Activated CD4-positive, alpha-beta memory T cell treated with anti-CD3 and anti-CD28 coated beads for 36 hours (primary cell): ENCODE measurements at regions of chr16 and their contacts with region 1.

Region 1: GRCh38 chr16:56964243-56965148 is 2.7 kb downstream of the CETP start:
- DNase-seq: peak; percentile 97
- H3K4me3 Mint-ChIP-seq: no peak overlapping the region
- H3K27ac Mint-ChIP-seq: peak overlapping the region; percentile 11
- H3K4me1 Mint-ChIP-seq: peaks cover 19% of the 10 kb centered on the region
- H3K27me3 Mint-ChIP-seq: no peaks in the 10 kb centered on the region

Region 2: GRCh38 chr16:56715120-56715519 is 249.4 kb before region 1 on chr16:
- CTCF ChIA-PET with region 1: no interaction called
- POLR2A ChIA-PET with region 1: no interaction called
- intact Hi-C with region 1: no loop called
- DNase-seq: no peak
- H3K4me3 Mint-ChIP-seq: no peak overlapping the region
- H3K27ac Mint-ChIP-seq: no peak overlapping the region
- H3K4me1 Mint-ChIP-seq: no peaks in the 10 kb centered on the region
- H3K27me3 Mint-ChIP-seq: no peaks in the 10 kb centered on the region

Region 3: DNA sequence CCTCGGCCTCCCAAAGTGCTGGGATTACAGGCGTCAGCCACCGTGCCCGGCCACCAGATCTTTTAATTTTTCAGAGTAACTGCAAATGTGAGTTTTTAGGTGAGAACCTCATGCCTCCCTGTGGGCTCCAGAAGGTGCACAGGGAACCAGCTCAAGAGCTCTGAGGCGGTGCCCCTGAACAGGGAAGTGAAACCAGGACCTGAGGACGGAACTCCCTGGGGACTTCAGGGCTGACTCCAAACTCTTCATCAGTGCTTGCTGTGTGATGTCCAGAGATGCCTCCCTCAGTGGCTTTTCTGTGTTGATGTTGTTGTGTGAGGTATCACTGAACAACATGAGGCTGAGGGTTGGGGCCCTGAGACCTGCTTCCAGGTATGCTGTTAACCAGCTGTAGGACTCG is 75.7 kb before region 1 on chr16:
- CTCF ChIA-PET with region 1: no interaction called
- POLR2A ChIA-PET with region 1: no interaction called
- intact Hi-C with region 1: no loop called
- DNase-seq: no peak
- H3K4me3 Mint-ChIP-seq: no peak overlapping the region
- H3K27ac Mint-ChIP-seq: no peak overlapping the region
- H3K4me1 Mint-ChIP-seq: no peaks in the 10 kb centered on the region
- H3K27me3 Mint-ChIP-seq: no peaks in the 10 kb centered on the region

Region 4: GRCh38 chr16:56944954-56945839 is 19.3 kb before region 1 on chr16:
- CTCF ChIA-PET with region 1: interaction called, 72 read pairs
- POLR2A ChIA-PET with region 1: no interaction called
- intact Hi-C with region 1: no loop called
- DNase-seq: peak; percentile 60
- H3K4me3 Mint-ChIP-seq: no peak overlapping the region
- H3K27ac Mint-ChIP-seq: peak overlapping the region; percentile 94
- H3K4me1 Mint-ChIP-seq: peaks cover 55% of the 10 kb centered on the region
- H3K27me3 Mint-ChIP-seq: no peaks in the 10 kb centered on the region

Region 5: GRCh38 chr16:56988948-56989945 is 24.8 kb after region 1 on chr16 and contains the start of gene NLRC5:
- CTCF ChIA-PET with region 1: interaction called, 91 read pairs
- POLR2A ChIA-PET with region 1: interaction called, 4 read pairs
- intact Hi-C with region 1: loop called (anchors 2 kb)
- DNase-seq: peak; percentile 94
- H3K4me3 Mint-ChIP-seq: peak within 1 kb of the TSS; percentile 96
- H3K27ac Mint-ChIP-seq: peak within 1 kb of the TSS; percentile 99
- H3K4me1 Mint-ChIP-seq: peaks cover 66% of the 10 kb centered on the region
- H3K27me3 Mint-ChIP-seq: no peaks in the 10 kb centered on the region
- total RNA-seq, gene NLRC5: 151 to 167 TPM

Region 6: DNA sequence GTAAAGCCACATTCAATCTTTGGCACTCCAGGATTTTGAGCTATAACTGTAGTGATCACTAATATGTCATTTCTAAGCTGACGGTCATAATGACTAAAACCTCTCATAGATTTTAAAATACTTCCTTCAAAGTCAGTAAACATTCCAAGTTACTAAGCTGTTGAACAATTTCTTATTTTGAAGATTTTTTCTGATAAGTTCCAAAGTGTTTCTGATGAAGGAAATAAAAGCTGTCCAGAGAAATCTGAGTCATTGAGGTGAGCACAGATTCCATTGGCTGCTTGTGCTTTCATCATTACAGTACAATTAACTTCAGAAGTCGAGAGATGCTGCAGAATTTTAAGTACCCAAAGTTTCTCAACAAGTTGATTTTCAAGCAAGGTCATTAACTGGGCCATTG is 48.7 kb after region 1 on chr16:
- CTCF ChIA-PET with region 1: interaction called, 14 read pairs
- POLR2A ChIA-PET with region 1: no interaction called
- intact Hi-C with region 1: loop called (anchors 2 kb)
- DNase-seq: peak; percentile 8
- H3K4me3 Mint-ChIP-seq: peak overlapping the region; percentile 47
- H3K27ac Mint-ChIP-seq: peak overlapping the region; percentile 93
- H3K4me1 Mint-ChIP-seq: peaks cover 85% of the 10 kb centered on the region
- H3K27me3 Mint-ChIP-seq: no peaks in the 10 kb centered on the region

Region 7: DNA sequence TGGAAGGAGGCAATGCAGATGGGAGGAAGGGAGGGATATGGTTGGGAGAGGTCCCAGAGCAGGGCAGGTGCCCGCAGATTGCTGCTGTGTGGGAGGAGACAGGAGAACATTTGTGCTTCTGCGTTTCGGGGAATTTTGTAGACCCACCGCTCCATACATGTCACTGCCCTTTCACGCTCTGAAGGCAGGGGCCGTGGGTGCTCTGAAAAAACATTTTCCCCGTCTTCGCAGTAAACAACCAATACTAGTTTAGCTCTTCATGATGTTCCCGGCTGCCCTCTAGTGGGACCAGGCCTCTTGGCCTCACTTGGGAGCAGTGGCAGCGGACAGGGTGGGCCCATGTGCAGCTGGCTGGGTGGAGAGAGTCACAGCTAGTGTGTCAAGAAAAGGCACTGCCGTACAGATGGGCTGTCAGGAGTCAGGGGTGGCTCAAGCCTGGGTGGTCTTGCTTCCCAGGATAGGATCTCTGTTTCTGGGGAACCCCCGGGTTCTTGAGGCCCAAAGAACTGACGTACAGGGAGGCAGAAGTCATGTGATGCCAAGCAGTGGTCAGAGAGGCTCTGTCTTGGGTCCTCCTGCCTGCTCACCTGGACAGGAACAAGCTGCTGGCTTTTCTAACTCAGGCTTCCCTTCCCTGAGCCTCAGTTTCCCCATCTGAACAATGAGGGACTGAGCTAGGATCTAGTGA is 81.3 kb after region 1 on chr16:
- CTCF ChIA-PET with region 1: interaction called, 84 read pairs
- POLR2A ChIA-PET with region 1: interaction called, 3 read pairs
- intact Hi-C with region 1: loop called (anchors 1 kb)
- DNase-seq: peak; percentile 43
- H3K4me3 Mint-ChIP-seq: no peak overlapping the region
- H3K27ac Mint-ChIP-seq: peak overlapping the region; percentile 64
- H3K4me1 Mint-ChIP-seq: peaks cover 57% of the 10 kb centered on the region
- H3K27me3 Mint-ChIP-seq: no peaks in the 10 kb centered on the region

Region 8: DNA sequence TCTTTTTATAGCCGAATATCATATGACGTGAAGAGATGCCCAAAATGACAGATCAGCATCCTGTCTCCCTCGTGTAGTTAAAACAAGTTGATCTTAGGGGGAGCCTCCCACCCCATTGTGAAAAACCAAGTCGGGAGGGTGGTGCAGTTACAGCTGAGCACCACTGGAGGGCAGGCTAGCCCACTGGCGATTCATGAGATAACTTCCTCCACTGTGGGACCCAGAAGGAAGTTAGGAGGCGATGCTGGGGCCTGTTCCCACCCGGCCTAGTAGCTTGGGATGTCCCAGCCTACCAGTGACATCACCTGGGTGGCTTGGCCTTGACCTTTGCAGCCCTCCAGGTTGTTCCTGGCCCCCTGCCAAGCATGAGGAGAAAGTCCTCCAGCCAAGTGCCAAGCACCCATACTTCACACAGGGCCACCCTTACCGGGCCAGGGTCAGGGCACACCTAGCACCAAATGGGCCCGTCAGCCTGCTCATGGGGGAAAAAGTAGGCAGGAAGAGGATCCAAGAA is 119.8 kb after region 1 on chr16:
- CTCF ChIA-PET with region 1: interaction called, 34 read pairs
- POLR2A ChIA-PET with region 1: no interaction called
- intact Hi-C with region 1: loop called (anchors 1 kb)
- DNase-seq: peak; percentile 85
- H3K4me3 Mint-ChIP-seq: no peak overlapping the region
- H3K27ac Mint-ChIP-seq: no peak overlapping the region
- H3K4me1 Mint-ChIP-seq: peaks cover 6% of the 10 kb centered on the region
- H3K27me3 Mint-ChIP-seq: no peaks in the 10 kb centered on the region